Activated B cell treated with CpG ODN at 0.5 μM for 24 hours (primary cell): ENCODE measurements at regions of chr12 and their contacts with region 1.

Region 1: GRCh38 chr12:128810182-128811127 is 13.3 kb downstream of the SLC15A4 start:
- DNase-seq: no peak
- ATAC-seq: peak; percentile 88
- H3K4me3 Mint-ChIP-seq: peak overlapping the region; percentile 58
- H3K27ac Mint-ChIP-seq: peak overlapping the region; percentile 87
- H3K4me1 Mint-ChIP-seq: peaks cover 67% of the 10 kb centered on the region
- H3K27me3 Mint-ChIP-seq: no peaks in the 10 kb centered on the region
- CTCF ChIP-seq: no peak

Region 2: GRCh38 chr12:128823916-128824839 is 13.7 kb after region 1 on chr12 and contains the start of gene SLC15A4:
- CTCF ChIA-PET with region 1: interaction called, 14 read pairs
- POLR2A ChIA-PET with region 1: interaction called, 63 read pairs
- intact Hi-C with region 1: no loop called
- DNase-seq: peak; percentile 93
- ATAC-seq: peak; percentile 82
- H3K4me3 Mint-ChIP-seq: peak within 1 kb of the TSS; percentile 87
- H3K27ac Mint-ChIP-seq: peak within 1 kb of the TSS; percentile 82
- H3K4me1 Mint-ChIP-seq: peaks cover 57% of the 10 kb centered on the region
- H3K27me3 Mint-ChIP-seq: no peaks in the 10 kb centered on the region
- CTCF ChIP-seq: no peak
- total RNA-seq, gene SLC15A4: 48.5 and 54.0 TPM in 2 replicates